ENCODE measurements at regions of chr2 and their contacts with region 1.

Region 1: DNA sequence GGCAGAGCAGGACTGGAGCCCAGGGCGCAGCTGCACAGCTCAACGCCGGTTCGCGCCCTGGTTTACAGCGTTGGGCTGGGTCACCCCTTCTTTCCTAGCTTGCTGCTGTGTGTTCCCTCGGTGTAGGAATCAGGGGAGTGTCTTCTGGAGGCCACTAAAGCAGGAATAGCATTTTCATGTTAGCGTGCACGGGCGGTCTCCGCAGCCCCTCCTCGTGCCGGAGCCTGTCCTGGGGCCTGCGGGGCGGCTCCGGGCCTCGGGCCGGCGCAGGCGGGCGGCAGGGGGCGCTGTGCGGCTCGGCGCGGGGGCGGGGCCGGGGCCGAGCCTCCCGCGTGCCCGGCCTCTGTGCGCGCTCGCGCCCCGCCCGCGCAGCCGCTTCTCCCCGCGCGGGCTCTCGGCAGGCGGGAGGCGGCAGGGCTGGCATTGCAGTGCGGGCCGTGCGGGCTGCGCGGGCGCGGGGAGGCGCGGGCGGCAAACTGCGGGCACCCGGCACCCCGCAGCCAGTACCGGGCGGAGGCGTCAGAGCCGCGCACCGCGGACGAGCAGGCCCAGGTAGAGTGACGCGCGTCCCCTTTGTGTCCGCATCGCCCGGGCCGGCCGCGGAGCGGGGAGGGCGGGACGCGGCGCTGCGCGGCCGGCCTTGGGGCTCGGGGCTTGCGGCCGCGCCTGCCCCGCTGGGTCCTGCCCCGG is at the start of gene RNF144A:
- DNase-seq: peak; percentile 80
- ATAC-seq: peak; percentile 84
- total RNA-seq, gene RNF144A: 14.5 TPM

Region 2: DNA sequence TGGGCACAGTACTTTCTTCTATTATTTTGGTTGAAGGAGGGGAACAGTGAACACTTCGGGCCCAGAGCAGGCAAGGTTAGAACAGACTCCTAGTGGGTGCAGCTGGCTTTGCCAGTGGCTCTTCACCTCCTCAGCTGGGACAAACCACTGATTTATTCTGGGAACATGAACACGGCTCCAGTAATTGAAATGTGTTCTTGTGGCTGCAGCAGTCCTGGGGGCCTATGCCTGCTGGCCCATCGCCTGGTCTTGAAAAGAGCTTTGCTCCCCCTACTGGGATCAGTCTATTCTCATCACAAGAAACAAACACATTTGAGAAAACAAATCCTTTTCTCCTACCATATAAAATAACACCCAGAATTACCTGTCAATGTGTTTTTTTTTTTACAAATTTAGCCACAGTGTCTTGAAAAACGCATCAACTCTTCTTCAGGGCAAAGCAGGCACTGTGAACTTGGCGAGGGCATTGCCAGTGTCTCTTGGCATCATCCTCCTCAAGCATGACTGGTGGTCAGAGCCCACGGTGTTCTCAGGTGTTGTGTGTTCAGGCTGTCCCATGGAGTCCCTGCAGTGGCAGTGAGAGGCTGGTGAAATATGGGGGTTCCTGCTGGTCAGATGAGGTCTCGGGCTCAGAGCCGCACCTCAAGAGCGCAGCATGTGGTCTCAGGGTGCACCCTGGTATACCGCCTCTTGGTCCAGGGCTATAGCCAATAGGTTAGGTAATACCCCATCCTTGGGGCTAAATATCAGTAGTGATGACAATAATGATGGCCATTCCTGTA is 51.3 kb after region 1 on chr2:
- intact Hi-C with region 1: loop called (anchors 10 kb)
- DNase-seq: peak; percentile 60
- ATAC-seq: peak; percentile 87

Region 3: DNA sequence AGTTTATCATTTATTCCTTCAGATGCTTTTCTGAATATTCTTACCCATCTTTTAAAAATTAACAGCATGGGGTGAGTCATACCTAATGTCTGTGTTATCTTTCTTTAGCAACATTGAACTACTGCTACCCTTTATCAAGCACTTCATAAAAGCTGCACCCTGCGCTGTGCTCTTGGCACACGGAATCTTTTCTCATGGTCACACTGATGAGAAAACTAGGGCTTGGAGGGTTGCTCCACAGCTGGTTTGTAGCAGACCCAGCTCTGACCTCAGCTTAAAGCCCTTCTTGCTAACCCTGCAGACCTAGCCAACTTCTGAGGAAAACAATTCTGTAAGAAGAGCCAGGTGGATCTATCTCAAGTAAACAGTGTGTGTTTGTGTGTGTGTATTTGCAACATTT is 106.3 kb after region 1 on chr2:
- intact Hi-C with region 1: loop called (anchors 5 kb)
- DNase-seq: no peak
- ATAC-seq: peak; percentile 74

Region 4: GRCh38 chr2:7044261-7045250 is 127.3 kb after region 1 on chr2:
- intact Hi-C with region 1: loop called (anchors 5 kb)
- DNase-seq: peak; percentile 81
- ATAC-seq: peak; percentile 82

Measured in Right ventricle myocardium superior (tissue), 1 donor.